HCT116 (cell line): ENCODE measurements at regions of chr2 and their contacts with region 1.

Region 1: DNA sequence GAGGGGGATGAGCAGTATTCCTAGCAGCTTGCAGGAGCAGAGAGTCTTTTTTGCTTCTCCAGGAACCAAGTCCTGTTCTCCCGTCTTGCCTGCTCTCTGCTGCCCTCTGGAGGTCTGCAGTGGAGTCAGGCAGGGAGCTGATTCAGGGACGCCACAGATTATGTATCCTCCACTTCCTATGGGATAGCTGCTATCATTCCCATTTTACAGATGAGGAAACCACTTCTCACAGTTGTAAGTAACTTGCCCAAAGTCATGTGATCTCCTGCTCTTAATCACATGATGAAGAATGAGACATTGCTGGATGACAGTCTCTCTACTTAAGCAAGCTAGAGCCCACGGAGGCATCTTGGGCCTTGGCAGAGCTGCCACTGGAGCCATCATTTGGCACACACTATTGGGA is 8.3 kb downstream of the SLC4A5 start:
- DNase-seq: peak; percentile 57
- ATAC-seq: peak; percentile 96
- H3K4me3 ChIP-seq: no peak overlapping the region
- H3K27ac ChIP-seq: no peak overlapping the region
- H3K4me1 ChIP-seq: no peaks in the 10 kb centered on the region
- H3K27me3 ChIP-seq: no peaks in the 10 kb centered on the region
- CTCF ChIP-seq: peak; percentile 74 to 98 (median 82)
- POLR2A ChIP-seq: no peak
- RAD21 ChIP-seq: peak; percentile 72

Region 2: GRCh38 chr2:74010087-74010661 is 324.8 kb before region 1 on chr2:
- CTCF ChIA-PET with region 1: no interaction called
- POLR2A ChIA-PET with region 1: no interaction called
- RAD21 ChIA-PET with region 1: no interaction called
- intact Hi-C with region 1: no loop called
- DNase-seq: no peak
- ATAC-seq: no peak
- H3K4me3 ChIP-seq: no peak overlapping the region
- H3K27ac ChIP-seq: no peak overlapping the region
- H3K4me1 ChIP-seq: peaks cover 6 to 15% of the 10 kb centered on the region in 2 experiments; a peak in 3 of 4 replicates
- H3K27me3 ChIP-seq: no peaks in the 10 kb centered on the region
- CTCF ChIP-seq: no peak
- POLR2A ChIP-seq: no peak
- RAD21 ChIP-seq: no peak

Region 3: GRCh38 chr2:74250189-74250631 is 84.7 kb before region 1 on chr2:
- CTCF ChIA-PET with region 1: interaction called, 12 read pairs
- POLR2A ChIA-PET with region 1: no interaction called
- RAD21 ChIA-PET with region 1: no interaction called
- intact Hi-C with region 1: loop called (anchors 2 kb)
- DNase-seq: peak; percentile 36
- ATAC-seq: peak; percentile 92
- H3K4me3 ChIP-seq: no peak overlapping the region
- H3K27ac ChIP-seq: no peak overlapping the region
- H3K4me1 ChIP-seq: no peaks in the 10 kb centered on the region
- H3K27me3 ChIP-seq: no peaks in the 10 kb centered on the region
- CTCF ChIP-seq: peak; percentile 67 to 83 (median 81); a peak in 5 of 6 replicates
- POLR2A ChIP-seq: no peak
- RAD21 ChIP-seq: peak; percentile 69

Region 4: GRCh38 chr2:74345272-74345943 is 10.5 kb after region 1 on chr2:
- CTCF ChIA-PET with region 1: interaction called, 19 read pairs
- POLR2A ChIA-PET with region 1: no interaction called
- RAD21 ChIA-PET with region 1: no interaction called
- intact Hi-C with region 1: no loop called
- DNase-seq: no peak
- ATAC-seq: no peak
- H3K4me3 ChIP-seq: no peak overlapping the region
- H3K27ac ChIP-seq: no peak overlapping the region
- H3K4me1 ChIP-seq: no peaks in the 10 kb centered on the region
- H3K27me3 ChIP-seq: no peaks in the 10 kb centered on the region
- CTCF ChIP-seq: no peak
- POLR2A ChIP-seq: no peak
- RAD21 ChIP-seq: no peak

Region 5: DNA sequence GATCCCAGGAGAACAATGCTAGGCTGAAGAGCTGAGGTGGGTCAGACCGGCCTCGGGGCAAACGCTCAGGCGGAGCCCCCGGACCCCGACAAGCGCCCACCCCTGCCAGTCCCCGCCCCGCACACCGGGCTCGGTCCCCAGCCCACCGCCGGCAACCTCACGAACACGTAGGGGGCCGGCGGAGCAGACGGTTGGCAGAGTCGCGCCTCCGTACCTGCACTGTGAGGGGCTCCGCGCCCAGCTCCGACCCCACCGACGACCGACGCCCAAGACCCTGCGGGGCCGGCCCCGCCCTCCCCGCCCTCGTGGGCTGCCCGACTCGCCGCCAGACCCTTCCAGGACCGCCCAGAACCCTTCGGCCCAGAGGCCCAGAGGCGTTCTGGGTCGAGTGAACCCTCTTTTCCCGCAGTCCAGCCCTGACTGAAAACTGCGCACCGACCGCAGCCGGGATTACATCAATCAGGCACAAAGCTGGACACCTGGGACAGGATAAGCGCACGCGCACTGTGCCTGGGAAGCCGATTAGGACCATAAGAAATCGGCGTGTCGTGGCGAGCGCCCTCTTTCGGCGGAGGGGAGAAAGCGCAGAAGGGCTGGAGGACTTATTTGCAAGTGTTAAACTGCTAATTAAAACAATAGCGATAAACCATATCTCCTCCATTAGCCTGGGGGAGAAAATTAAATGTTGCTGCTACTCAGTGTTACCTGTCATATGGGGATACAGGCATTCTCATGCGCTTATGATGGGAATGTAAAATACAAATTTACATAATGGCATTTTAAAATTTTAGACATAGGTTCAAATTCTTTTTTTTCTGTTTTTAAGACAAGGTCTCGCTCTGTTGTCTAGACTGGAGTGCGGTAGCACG is 56.9 kb after region 1 on chr2:
- CTCF ChIA-PET with region 1: interaction called, 18 read pairs
- POLR2A ChIA-PET with region 1: no interaction called
- RAD21 ChIA-PET with region 1: no interaction called
- intact Hi-C with region 1: loop called (anchors 2 kb)
- DNase-seq: peak; percentile 88
- ATAC-seq: peak; percentile 85
- H3K4me3 ChIP-seq: peak overlapping the region; percentile 93 to 95
- H3K27ac ChIP-seq: peak overlapping the region; percentile 69
- H3K4me1 ChIP-seq: peaks cover 5 to 17% of the 10 kb centered on the region in 2 experiments; a peak in 3 of 4 replicates
- H3K27me3 ChIP-seq: no peaks in the 10 kb centered on the region
- CTCF ChIP-seq: peak; percentile 81 to 99 (median 96)
- POLR2A ChIP-seq: peak; percentile 47
- RAD21 ChIP-seq: peak; percentile 51; the same call in 1 of the 2 replicates

Region 6: GRCh38 chr2:74658516-74658915 is 323.6 kb after region 1 on chr2:
- CTCF ChIA-PET with region 1: no interaction called
- POLR2A ChIA-PET with region 1: no interaction called
- RAD21 ChIA-PET with region 1: no interaction called
- intact Hi-C with region 1: no loop called
- DNase-seq: no peak
- ATAC-seq: no peak
- H3K4me3 ChIP-seq: no peak overlapping the region
- H3K27ac ChIP-seq: no peak overlapping the region
- H3K4me1 ChIP-seq: peaks cover 0 to 18% of the 10 kb centered on the region in 2 experiments; a peak in 3 of 4 replicates
- H3K27me3 ChIP-seq: no peaks in the 10 kb centered on the region
- CTCF ChIP-seq: no peak
- POLR2A ChIP-seq: no peak
- RAD21 ChIP-seq: no peak